CD4-positive, alpha-beta memory T cell (primary cell): ENCODE measurements at regions of chr16 and their contacts with region 1.

Region 1: GRCh38 chr16:3234543-3235541 is at the start of gene ZNF200:
- DNase-seq: peak; percentile 92 to 96 (median 95)
- H3K4me3 ChIP-seq: peak within 1 kb of the TSS; percentile 91 to 94
- H3K4me3 Mint-ChIP-seq: peak within 1 kb of the TSS; percentile 93 to 98 (median 96)
- H3K27ac ChIP-seq: peak within 1 kb of the TSS; percentile 88
- H3K27ac Mint-ChIP-seq: peak within 1 kb of the TSS; percentile 96 to 99 (median 98)
- H3K4me1 ChIP-seq: peaks cover 29% of the 10 kb centered on the region
- H3K4me1 Mint-ChIP-seq: peaks cover 17 to 41% (median 23%) of the 10 kb centered on the region in 4 donors
- H3K27me3 ChIP-seq: no peaks in the 10 kb centered on the region
- H3K27me3 Mint-ChIP-seq: no peaks in the 10 kb centered on the region
- total RNA-seq, gene ZNF200: 27.7 to 29.2 TPM

Region 2: DNA sequence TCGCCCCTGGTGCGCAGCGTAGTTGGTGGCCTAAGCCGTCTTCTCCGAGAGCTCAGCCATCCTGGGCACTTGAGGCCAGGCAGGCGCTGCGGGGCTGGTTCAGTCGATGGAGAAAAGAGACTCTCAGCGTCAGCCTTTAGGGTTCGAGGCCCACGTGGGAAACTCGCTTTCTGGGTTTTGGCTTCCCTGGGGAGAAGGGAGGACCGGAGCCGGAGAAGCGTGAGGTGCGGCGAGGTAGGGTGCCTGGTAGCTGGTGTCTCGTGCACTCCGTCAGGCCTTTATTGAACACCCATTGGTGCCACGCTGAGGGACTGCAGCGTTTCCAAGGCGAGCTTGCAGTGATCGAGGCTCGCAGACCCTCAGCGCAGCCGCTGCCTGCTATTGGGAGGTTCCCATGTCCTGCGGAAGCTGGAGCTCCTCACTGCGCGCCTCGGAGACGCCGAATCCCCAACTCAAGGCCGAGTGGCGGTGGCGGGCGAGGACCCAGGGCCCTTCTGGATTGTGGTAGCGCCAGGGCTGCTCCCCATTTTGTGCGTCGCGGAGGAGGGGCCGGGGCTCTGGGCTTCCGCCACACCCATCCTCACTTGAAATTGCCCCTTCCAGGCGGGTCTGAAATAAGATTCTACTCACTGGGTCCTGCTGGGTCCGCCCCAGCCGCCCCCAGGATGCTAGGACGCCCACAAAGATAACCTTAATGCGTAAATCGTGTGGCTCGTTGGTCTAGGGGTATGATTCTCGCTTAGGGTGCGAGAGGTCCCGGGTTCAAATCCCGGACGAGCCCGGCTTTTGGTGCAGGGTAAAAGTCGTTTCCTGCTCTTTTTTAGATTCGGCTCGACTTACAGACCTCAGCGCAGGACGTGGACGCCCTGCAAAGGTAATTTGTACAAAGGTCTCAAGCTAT is 45.7 kb before region 1 on chr16:
- CTCF ChIA-PET with region 1: no interaction called
- POLR2A ChIA-PET with region 1: interaction called, 14 read pairs
- intact Hi-C with region 1: loop called (anchors 2 kb)
- DNase-seq: peak in 3 of 5 donors; percentile 44 to 45 (median 44)
- H3K4me3 ChIP-seq: peak overlapping the region; percentile 23 to 44
- H3K4me3 Mint-ChIP-seq: peak overlapping the region; percentile 48 to 84 (median 82)
- H3K27ac ChIP-seq: no peak overlapping the region
- H3K27ac Mint-ChIP-seq: peak overlapping the region; percentile 42 to 90 (median 54)
- H3K4me1 ChIP-seq: peaks cover 44% of the 10 kb centered on the region
- H3K4me1 Mint-ChIP-seq: peaks cover 18 to 49% (median 32%) of the 10 kb centered on the region in 4 donors
- H3K27me3 ChIP-seq: peaks cover 58% of the 10 kb centered on the region
- H3K27me3 Mint-ChIP-seq: peaks cover 45 to 51% of the 10 kb centered on the region in 2 donors

Region 3: GRCh38 chr16:3305109-3306068 is 70.5 kb after region 1 on chr16 and contains the starts of genes TIGD7 and ZNF75A:
- CTCF ChIA-PET with region 1: no interaction called
- POLR2A ChIA-PET with region 1: interaction called, 4 read pairs
- intact Hi-C with region 1: loop called (anchors 1 kb)
- DNase-seq: peak; percentile 82 to 93 (median 85)
- H3K4me3 ChIP-seq: peak within 1 kb of the TSS; percentile 80 to 88
- H3K4me3 Mint-ChIP-seq: peak within 1 kb of the TSS; percentile 79 to 87 (median 85)
- H3K27ac ChIP-seq: peak within 1 kb of the TSS; percentile 70
- H3K27ac Mint-ChIP-seq: peak within 1 kb of the TSS; percentile 64 to 84 (median 82)
- H3K4me1 ChIP-seq: peaks cover 16% of the 10 kb centered on the region
- H3K4me1 Mint-ChIP-seq: peaks cover 7 to 13% (median 11%) of the 10 kb centered on the region in 4 donors
- H3K27me3 ChIP-seq: no peaks in the 10 kb centered on the region
- H3K27me3 Mint-ChIP-seq: no peaks in the 10 kb centered on the region
- total RNA-seq, gene TIGD7: 14.2 to 19.0 TPM
- total RNA-seq, gene ZNF75A: 82.7 to 88.1 TPM

Region 4: DNA sequence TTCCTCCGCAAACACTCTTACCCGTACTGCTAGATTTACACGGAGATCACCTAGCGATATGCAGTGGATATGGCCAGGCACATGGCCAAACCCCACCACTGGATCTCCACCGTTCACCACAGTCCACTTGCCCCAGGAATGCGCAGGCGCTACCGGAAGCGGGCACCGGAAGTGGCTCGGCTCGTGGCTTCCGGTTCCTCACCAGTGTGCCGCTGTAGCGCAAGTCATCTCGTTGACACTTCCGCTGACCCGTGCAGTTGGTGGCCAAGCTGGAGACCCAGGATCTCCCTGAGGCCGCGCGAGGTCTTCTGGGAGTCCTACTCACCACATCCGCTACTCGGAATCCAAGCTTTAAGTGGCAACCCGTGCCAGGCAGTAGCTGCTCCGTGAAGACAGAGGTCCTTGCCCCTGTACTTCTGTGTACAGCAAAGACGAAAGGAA is 197.0 kb after region 1 on chr16:
- CTCF ChIA-PET with region 1: no interaction called
- POLR2A ChIA-PET with region 1: no interaction called
- intact Hi-C with region 1: no loop called
- DNase-seq: peak; percentile 46 to 62 (median 48)
- H3K4me3 ChIP-seq: no peak overlapping the region
- H3K4me3 Mint-ChIP-seq: peak overlapping the region; percentile 4 to 75 (median 50)
- H3K27ac ChIP-seq: no peak overlapping the region
- H3K27ac Mint-ChIP-seq: peak overlapping the region in 5 of 7 donors; percentile 69 to 92 (median 80)
- H3K4me1 ChIP-seq: peaks cover 11% of the 10 kb centered on the region
- H3K4me1 Mint-ChIP-seq: peaks cover 6 to 23% (median 12%) of the 10 kb centered on the region in 4 donors
- H3K27me3 ChIP-seq: no peaks in the 10 kb centered on the region
- H3K27me3 Mint-ChIP-seq: peaks cover 0 to 2% of the 10 kb centered on the region in 2 donors